GM13977 (cell line): ENCODE measurements at regions of chr4 and their contacts with region 1.

Region 1: DNA sequence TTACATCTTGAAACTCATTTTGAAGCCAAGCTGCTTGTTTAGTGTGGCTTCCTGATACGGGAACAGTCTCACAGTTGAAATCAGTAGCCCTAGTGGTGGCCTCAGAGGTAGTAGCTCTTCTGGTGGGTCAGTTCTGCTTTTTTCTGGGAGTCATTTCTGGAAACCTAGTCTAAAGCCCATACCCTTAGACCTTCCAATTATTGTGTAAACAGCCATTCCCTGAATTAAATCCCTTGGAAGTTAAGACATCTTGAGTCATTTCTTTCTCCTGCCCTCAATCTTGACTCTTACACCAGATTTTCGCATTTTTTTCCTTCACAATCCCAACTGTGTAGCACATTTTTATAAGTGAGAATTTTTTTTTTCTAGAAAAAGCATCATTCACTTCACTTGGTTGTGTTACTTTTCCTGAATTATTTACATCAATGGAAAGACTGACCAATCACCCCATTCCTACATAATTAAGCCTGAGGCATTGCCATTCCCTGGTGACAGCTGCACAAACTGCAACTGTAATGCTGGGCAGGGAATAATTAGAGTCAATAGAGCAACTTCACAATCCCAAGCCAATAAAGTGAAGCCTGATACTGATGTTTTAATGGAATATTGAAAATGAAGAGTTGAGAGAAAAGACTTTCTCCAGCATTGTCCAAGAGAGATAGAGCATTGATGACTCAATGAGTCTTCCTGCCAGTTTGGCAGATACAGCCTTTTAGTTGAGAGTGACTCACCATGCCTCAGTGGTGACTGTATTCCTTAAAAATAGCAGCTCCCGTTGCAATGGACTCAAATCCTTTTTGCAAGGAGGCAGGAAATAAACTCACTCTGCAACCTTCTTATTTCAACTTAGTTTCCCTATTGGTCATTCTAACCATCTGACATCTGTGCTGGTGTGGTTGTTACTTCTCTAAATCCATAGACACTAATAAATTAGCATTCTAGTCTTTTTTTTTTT is 13.0 kb upstream of the SEPSECS start:
- DNase-seq: peak; percentile 14
- CTCF ChIP-seq: peak; percentile 18

Region 2: DNA sequence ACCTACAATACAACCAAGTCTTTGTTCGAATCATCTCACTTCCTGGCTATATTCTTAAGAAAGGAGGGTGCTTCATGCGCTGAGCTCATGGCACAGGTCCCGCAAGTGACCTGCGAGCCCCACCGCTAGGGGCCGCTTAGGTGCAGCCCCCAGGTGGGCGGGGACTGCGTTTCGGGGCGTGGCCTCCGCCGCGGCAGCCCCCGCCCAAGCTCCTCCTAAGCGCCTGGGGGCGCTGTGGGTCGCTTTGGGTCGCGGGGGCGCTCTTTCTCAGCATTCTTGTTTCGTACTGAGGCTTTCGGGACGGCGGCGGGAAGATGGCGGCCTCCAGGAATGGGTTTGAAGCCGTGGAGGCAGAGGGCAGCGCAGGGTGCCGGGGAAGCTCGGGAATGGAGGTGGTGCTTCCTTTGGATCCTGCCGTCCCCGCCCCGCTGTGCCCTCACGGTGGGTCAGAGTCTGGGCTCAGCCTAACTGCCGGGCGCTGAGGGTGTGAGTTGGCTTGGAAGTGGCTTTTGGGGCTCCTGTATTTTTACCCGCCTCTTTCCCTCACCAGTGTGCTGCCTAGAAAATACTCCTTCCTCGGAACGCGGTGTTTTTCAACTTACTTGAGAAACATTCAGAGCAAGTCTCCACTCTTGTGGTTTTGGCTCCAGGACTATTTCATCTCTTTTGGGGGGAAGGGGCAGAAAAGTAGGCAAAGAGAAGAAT is 139.4 kb after region 1 on chr4 and contains the start of gene ZCCHC4:
- in situ Hi-C with region 1: loop called (anchors 10 kb)
- DNase-seq: peak; percentile 87
- CTCF ChIP-seq: peak; percentile 94

Region 3: GRCh38 chr4:25552580-25553271 is 379.5 kb after region 1 on chr4:
- in situ Hi-C with region 1: no loop called
- DNase-seq: no peak
- CTCF ChIP-seq: no peak